GM12878 (cell line): ENCODE measurements at regions of chr3 and their contacts with region 1.

Region 1: GRCh38 chr3:134250717-134251220 is at the start of gene RYK:
- DNase-seq: no peak
- ATAC-seq: peak; percentile 86
- H3K4me3 ChIP-seq: peak within 1 kb of the TSS; percentile 76
- H3K27ac ChIP-seq: no peak within 1 kb of the TSS
- H3K4me1 ChIP-seq: peaks cover 9% of the 10 kb centered on the region
- H3K27me3 ChIP-seq: no peaks in the 10 kb centered on the region
- CTCF ChIP-seq: no peak
- EP300 ChIP-seq: no peak
- POLR2A ChIP-seq: peak; percentile 83
- RAD21 ChIP-seq: no peak
- polyA plus RNA-seq, gene RYK: 3.4 to 4.3 TPM

Region 2: DNA sequence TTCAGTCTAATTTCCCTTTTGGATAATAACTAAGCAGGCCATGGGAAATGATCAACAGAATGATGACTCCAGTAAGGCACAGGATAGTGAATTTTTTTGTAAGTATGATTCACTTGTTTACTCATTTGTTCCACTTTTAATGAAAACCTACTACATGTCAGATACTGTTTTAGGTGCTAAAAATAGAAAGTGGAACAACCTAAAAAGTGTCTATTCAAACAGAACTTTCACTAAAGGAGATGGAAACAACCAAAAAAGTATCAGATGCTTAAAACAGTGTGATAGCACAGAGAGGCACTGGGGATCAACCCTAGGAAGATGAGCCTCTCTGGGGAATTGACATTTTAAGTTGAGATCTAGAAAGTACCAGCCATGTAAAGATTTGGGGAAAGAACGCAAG is 11.2 kb before region 1 on chr3:
- CTCF ChIA-PET with region 1: interaction called, 7 read pairs
- POLR2A ChIA-PET with region 1: interaction called, 5 read pairs
- RAD21 ChIA-PET with region 1: interaction called, 3 read pairs
- SMC1A ChIA-PET with region 1: interaction called, 32 read pairs
- in situ Hi-C with region 1: no loop called
- intact Hi-C with region 1: no loop called
- DNase-seq: no peak
- ATAC-seq: peak; percentile 49
- H3K4me3 ChIP-seq: no peak overlapping the region
- H3K27ac ChIP-seq: no peak overlapping the region
- H3K4me1 ChIP-seq: peaks cover 7% of the 10 kb centered on the region
- H3K27me3 ChIP-seq: no peaks in the 10 kb centered on the region
- CTCF ChIP-seq: no peak
- EP300 ChIP-seq: no peak
- POLR2A ChIP-seq: no peak
- RAD21 ChIP-seq: no peak

Region 3: GRCh38 chr3:134294302-134295280 is 43.8 kb after region 1 on chr3:
- CTCF ChIA-PET with region 1: no interaction called
- POLR2A ChIA-PET with region 1: no interaction called
- RAD21 ChIA-PET with region 1: no interaction called
- SMC1A ChIA-PET with region 1: no interaction called
- in situ Hi-C with region 1: no loop called
- intact Hi-C with region 1: loop called (anchors 5 kb)
- DNase-seq: peak; percentile 75
- ATAC-seq: peak; percentile 100
- H3K4me3 ChIP-seq: no peak overlapping the region
- H3K27ac ChIP-seq: no peak overlapping the region
- H3K4me1 ChIP-seq: peaks cover 11% of the 10 kb centered on the region
- H3K27me3 ChIP-seq: peaks cover 0 to 5% of the 10 kb centered on the region in 2 experiments; a peak in 1 of 4 replicates
- CTCF ChIP-seq: no peak
- EP300 ChIP-seq: peak; percentile 38 to 51; a peak in 2 of 4 replicates
- POLR2A ChIP-seq: no peak
- RAD21 ChIP-seq: no peak